Adrenal gland (tissue), 19 donors: ENCODE measurements at regions of chr1 and their contacts with region 1.

Region 1: DNA sequence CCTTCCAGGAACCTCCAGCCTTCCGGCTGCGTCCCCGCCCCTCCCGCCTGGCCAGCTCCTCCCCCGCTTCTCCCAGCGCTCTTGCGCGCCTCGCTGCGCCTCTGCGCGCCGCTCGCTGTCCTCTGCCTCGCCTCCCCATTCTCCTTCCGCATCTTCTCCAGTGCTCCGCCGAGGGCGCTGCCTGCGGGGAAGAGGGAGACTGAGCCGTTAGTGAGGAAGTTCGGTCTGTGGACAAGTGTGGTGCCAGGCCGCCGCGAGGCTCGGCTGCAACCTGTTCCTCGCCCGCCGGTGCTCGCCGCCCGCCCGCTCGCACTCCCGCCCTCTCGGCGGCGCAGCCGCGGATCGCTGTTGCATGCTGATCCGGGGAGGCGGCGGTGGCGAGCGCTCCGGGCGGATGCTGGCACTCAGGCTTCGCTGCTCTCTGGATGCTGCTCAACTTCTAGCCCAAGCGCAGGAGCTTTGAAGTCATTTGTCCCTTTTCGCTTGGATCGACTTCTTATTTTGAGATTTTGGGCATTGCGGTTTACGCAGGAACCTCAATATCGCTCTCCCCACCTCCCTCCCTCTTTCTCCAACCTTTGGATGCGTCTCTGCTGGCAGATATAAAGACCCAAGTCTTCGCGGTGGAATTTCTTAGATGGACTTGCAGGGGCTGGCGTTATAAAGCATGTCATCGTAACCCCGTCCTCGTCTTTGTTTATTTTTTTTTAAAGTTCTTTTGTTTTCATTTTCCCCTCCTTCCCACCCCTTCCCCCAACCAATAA is 614 bp upstream of the CACNA1E start:
- DNase-seq: peak in 2 of 7 donors; percentile 26 to 65
- H3K4me3 ChIP-seq: no peak overlapping the region
- H3K27ac ChIP-seq: no peak overlapping the region
- H3K4me1 ChIP-seq: peaks cover 0 to 4% of the 10 kb centered on the region in 2 donors
- H3K27me3 ChIP-seq: peaks cover 63% of the 10 kb centered on the region
- CTCF ChIP-seq: no peak
- POLR2A ChIP-seq: no peak

Region 2: GRCh38 chr1:181676269-181676668 is 193.6 kb after region 1 on chr1:
- intact Hi-C with region 1: loop called in 1 of 2 experiments (anchors 10 kb)
- DNase-seq: peak in 2 of 7 donors; percentile 6 to 63
- H3K4me3 ChIP-seq: no peak overlapping the region
- H3K27ac ChIP-seq: no peak overlapping the region
- H3K4me1 ChIP-seq: no peaks in the 10 kb centered on the region
- H3K27me3 ChIP-seq: no peaks in the 10 kb centered on the region
- CTCF ChIP-seq: peak in 2 of 6 experiments; percentile 3 to 28
- POLR2A ChIP-seq: no peak

Region 3: GRCh38 chr1:182054698-182055326 is 572.1 kb after region 1 on chr1:
- intact Hi-C with region 1: loop called in 1 of 2 experiments (anchors 5 kb)
- DNase-seq: peak; percentile 35 to 69 (median 54)
- H3K4me3 ChIP-seq: no peak overlapping the region
- H3K27ac ChIP-seq: no peak overlapping the region
- H3K4me1 ChIP-seq: no peaks in the 10 kb centered on the region
- H3K27me3 ChIP-seq: peaks cover 9% of the 10 kb centered on the region
- CTCF ChIP-seq: peak; percentile 28 to 56 (median 50)
- POLR2A ChIP-seq: no peak

Region 4: DNA sequence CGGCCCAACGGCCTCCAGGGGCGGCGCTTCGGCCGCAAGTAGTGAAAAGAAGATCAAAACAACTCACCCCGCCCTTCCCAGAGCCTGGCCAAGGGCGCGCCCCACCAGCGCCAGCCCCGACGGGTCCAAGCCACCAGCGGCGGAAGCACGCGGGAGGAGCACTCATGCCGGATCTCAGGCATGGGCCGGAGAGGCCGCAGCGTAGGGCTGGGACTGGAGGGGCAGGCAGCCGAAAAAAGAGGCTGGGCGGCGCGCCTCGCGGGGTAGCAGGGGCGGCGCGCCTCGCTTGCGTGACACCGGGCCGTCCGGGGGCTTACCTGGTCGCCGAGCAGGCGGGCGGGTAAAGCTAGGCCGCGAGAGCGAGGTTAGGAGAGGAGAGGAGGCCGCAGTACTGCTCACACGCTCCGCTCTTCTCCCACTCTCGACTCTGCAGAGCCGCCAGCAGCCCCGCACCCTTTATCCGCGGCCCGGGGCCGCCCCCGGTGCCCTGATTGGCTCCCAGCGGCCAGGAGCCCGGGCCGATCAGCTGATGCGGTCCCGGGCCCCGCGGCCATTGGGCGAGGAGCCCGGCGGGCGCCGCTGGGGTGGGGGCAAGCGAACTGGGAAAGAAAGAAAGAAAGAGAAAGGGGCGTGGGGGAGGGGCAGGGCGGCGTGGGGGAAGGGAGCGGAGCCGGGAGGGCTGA is 908.8 kb after region 1 on chr1 and contains the start of gene GLUL:
- intact Hi-C with region 1: loop called in 1 of 2 experiments (anchors 10 kb)
- DNase-seq: peak; percentile 94 to 97 (median 95)
- H3K4me3 ChIP-seq: peak within 1 kb of the TSS; percentile 46 to 96 (median 67)
- H3K27ac ChIP-seq: peak within 1 kb of the TSS; percentile 82 to 98 (median 94)
- H3K4me1 ChIP-seq: peaks cover 5 to 26% of the 10 kb centered on the region in 2 donors
- H3K27me3 ChIP-seq: no peaks in the 10 kb centered on the region
- CTCF ChIP-seq: peak in 1 of 6 experiments; percentile 1
- POLR2A ChIP-seq: peak; percentile 97 to 98
- total RNA-seq, gene GLUL: 155 to 1,048 (median 512) TPM